Kidney (tissue), 22 donors: ENCODE measurements at regions of chr9 and their contacts with region 1.

Region 1: DNA sequence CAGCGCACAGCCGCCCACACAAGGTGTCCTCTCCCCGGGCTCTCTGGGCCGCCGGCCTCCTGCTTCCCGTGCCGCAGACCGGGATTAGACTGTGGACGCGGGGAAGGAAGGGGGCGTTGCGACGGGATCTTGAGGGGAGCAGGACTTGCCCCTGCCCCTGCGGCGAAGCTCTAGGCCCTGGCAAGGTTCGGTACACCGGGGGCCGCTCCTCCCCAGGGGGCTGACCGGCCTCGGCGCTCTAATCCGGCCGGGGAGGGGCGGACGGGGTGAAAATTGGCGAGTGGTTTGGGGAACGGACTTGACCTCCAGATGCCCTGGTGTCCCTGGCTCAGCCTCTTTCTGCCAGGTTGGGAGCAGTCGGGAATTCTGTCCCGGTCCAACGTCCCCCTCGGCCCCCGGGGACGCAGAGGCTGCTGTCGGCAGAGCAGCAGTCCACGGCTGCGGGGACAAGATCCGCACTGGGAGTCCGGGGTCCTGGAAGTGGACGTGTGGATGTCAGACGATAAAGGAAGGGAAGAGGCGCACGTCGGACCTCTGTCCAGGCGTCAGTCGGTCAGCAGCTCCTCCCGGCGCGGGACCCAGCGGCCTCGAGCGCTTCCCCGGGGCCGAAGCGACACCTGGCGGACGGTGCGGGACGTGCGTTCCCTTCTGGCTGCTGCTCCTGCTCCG is 1.9 kb upstream of the CNTFR start:
- DNase-seq: peak; percentile 88 to 94 (median 91)
- H3K4me3 ChIP-seq: peak overlapping the region in 1 of 3 donors; percentile 39
- H3K27ac ChIP-seq: no peak overlapping the region
- H3K4me1 ChIP-seq: peaks cover 0 to 4% (median 3%) of the 10 kb centered on the region in 3 donors
- H3K27me3 ChIP-seq: peaks cover 14% of the 10 kb centered on the region
- CTCF ChIP-seq: peak; percentile 97

Region 2: DNA sequence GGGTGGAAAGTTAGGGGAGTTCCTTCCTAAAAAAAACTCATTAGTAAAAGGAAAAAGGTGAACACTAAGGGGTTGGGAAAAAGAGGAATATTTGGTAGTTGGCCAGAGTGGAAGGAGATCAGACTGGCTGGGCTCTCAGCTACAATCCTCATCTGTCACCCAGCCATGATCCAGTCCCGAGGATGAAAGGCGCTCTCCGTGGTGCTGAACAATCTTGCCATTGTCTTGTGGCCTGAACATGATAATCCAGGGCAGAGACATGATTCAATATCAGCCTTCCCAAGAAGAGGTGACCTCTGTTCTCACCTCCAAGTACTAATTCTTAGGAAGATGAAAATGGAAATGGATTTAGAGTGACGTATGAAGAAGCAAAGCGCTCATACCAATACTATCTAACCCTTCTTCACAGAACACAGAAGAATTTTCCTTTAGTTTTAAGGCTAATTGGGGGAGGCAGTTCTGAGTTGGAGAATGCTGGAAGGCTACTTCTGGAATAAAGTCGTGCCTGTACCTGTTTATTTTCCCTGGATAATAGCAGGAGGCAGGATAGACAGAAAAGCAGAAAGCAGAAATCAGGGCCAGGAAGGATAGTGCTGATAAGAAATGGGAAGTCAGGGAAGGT is 178.0 kb before region 1 on chr9:
- intact Hi-C with region 1: loop called (anchors 10 kb)
- DNase-seq: peak in 4 of 5 donors; percentile 69 to 92 (median 84)
- H3K4me3 ChIP-seq: no peak overlapping the region
- H3K27ac ChIP-seq: no peak overlapping the region
- H3K4me1 ChIP-seq: no peaks in the 10 kb centered on the region
- H3K27me3 ChIP-seq: no peaks in the 10 kb centered on the region
- CTCF ChIP-seq: no peak

Region 3: DNA sequence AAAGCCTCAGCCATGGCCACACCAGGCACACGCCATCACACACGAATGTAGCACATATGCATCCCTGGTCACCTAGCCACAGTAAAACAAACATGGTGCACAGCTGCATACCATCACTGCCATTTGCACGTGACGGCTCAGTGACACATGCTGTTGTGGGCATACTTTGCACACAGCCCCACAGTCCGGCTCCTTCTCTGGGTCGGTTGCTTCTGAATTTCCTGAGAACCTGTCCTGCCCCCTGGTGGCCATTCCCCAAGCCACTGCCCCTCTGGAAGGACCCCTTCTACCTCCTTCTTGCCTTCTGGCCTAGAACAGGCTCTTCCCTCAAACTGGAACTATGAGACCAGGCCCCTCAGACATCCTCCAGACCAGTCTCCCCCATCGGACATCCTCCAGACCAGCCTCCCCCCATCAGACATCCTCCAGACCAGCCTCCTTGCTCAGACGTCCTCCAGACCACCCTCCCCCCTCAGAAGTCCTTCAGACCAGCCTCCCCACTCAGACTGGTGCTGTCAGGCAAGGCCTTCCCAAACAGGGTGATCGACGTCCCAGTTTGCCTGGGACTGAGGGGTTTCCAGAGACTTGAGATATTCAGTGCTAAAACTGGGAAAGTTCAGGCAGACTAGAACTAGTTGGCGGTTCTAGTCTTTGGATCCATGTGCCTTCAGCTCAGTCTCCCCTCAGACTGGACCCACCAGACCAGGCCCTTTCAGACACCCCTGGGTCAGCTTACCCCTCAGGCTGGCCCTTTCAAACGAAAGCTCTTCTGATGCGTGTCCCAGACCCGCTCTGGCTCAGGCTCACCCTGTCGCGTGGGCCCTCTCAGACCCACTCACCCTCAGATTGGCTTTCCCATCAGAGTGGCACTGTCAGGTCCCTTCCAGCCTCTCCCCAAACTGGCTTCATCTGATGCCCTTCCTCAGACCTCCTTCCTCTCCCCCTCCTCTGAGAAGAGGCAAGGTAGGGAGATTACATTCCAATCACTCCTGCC is 44.3 kb before region 1 on chr9:
- intact Hi-C with region 1: loop called (anchors 5 kb)
- DNase-seq: peak; percentile 68 to 85 (median 78)
- H3K4me3 ChIP-seq: no peak overlapping the region
- H3K27ac ChIP-seq: no peak overlapping the region
- H3K4me1 ChIP-seq: no peaks in the 10 kb centered on the region
- H3K27me3 ChIP-seq: no peaks in the 10 kb centered on the region
- CTCF ChIP-seq: peak; percentile 47

Region 4: GRCh38 chr9:34737677-34738260 is 146.4 kb after region 1 on chr9:
- intact Hi-C with region 1: no loop called
- DNase-seq: no peak
- H3K4me3 ChIP-seq: no peak overlapping the region
- H3K27ac ChIP-seq: no peak overlapping the region
- H3K4me1 ChIP-seq: no peaks in the 10 kb centered on the region
- H3K27me3 ChIP-seq: no peaks in the 10 kb centered on the region
- CTCF ChIP-seq: no peak